ENCODE measurements at regions of chr16 and their contacts with region 1.

Region 1: GRCh38 chr16:81616321-81617055 is 162.6 kb upstream of the PLCG2 start:
- DNase-seq: peak; percentile 37
- H3K4me3 ChIP-seq: no peak overlapping the region
- H3K27ac ChIP-seq: no peak overlapping the region
- H3K4me1 ChIP-seq: peaks cover 6% of the 10 kb centered on the region
- H3K27me3 ChIP-seq: no peaks in the 10 kb centered on the region
- CTCF ChIP-seq: no peak
- POLR2A ChIP-seq: no peak

Region 2: DNA sequence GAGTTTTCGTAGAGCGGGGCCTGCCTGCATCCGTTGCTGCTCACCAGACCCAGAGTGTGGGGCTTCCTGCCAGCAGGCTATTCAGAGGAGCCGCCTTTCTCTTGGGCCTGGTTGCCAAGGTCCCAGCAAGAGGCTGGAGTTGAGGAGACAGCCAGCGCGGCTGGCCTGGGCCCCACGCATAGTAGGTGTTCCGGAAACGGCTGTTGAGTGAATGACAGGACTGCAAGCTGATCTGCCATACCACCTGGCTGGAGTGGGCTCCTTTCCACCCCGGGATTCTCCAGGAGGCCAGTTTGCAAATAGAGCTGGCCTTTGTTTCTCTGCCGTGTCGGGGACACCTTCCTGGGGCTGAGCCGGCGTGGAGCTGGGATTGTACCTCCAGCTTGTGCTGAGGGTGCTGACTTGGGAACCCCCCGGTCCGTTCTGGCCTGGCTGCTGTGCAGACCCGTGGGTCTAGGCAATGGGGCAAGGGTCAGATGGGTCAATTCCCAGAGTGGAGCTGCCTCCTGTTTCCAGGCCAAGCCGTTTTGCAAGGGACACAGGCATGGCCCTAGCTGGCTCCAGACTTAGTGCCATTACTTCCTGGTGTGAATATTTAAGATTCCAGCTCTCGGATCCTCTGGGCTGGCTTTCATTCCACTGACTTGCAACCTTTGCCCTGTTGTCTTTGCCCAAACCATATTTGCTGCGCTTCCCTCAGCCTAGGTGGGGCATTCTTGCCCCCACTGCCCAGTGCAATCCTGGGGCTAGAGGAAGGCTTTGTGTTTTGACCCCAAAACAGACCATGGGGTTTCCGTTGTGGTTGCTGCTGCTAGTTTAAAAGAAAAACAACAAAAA is 103.1 kb before region 1 on chr16:
- intact Hi-C with region 1: no loop called
- DNase-seq: peak; percentile 79
- H3K4me3 ChIP-seq: no peak overlapping the region
- H3K27ac ChIP-seq: no peak overlapping the region
- H3K4me1 ChIP-seq: peaks cover 8% of the 10 kb centered on the region
- H3K27me3 ChIP-seq: no peaks in the 10 kb centered on the region
- CTCF ChIP-seq: no peak
- POLR2A ChIP-seq: no peak

Region 3: GRCh38 chr16:81581112-81581511 is 35.4 kb before region 1 on chr16:
- intact Hi-C with region 1: no loop called
- DNase-seq: no peak
- H3K4me3 ChIP-seq: no peak overlapping the region
- H3K27ac ChIP-seq: no peak overlapping the region
- H3K4me1 ChIP-seq: peaks cover 12% of the 10 kb centered on the region
- H3K27me3 ChIP-seq: no peaks in the 10 kb centered on the region
- CTCF ChIP-seq: no peak
- POLR2A ChIP-seq: no peak

Region 4: GRCh38 chr16:81711657-81712319 is 95.3 kb after region 1 on chr16:
- intact Hi-C with region 1: loop called (anchors 10 kb)
- DNase-seq: no peak
- H3K4me3 ChIP-seq: no peak overlapping the region
- H3K27ac ChIP-seq: no peak overlapping the region
- H3K4me1 ChIP-seq: peaks cover 4% of the 10 kb centered on the region
- H3K27me3 ChIP-seq: no peaks in the 10 kb centered on the region
- CTCF ChIP-seq: no peak
- POLR2A ChIP-seq: no peak

Measured in testis (tissue), 5 donors.